Testis (tissue), 5 donors: ENCODE measurements at regions of chr1 and their contacts with region 1.

Region 1: DNA sequence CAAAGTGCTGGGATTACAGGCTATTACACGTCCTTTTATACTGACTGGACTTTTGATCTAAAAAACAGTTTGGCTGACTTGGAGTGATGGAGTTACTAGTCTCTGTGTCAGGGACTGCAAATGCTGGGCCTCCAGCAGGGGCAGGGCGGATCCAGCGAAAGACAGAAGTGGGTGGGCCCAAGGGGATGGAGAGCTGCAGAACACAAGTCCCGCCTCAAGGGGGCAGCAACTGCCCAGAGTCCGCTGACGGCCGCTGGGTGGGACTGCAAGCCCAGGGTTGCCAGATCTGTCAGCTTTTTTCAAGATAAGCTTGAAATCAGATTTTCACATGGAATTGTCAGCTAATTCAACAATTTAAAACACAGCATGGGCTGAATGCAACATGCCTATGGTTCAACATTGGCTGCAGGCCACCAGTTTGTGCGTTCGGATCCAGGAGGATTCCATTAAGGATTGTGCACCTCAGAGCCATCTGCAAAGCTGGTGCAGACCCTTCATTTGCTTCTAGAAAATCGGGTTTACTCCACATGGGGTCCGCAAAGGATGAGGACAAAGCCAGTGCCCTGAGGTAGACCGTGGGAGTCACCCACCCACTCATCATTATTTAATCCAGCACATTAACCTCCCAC is 10.7 kb downstream of the STMN1 start:
- DNase-seq: peak; percentile 92
- H3K4me3 ChIP-seq: no peak overlapping the region
- H3K27ac ChIP-seq: peak overlapping the region in 1 of 2 donors; percentile 20
- H3K4me1 ChIP-seq: peaks cover 51% of the 10 kb centered on the region
- H3K27me3 ChIP-seq: no peaks in the 10 kb centered on the region
- CTCF ChIP-seq: peak; percentile 92 to 97 (median 95)
- POLR2A ChIP-seq: no peak

Region 2: GRCh38 chr1:25503551-25504426 is 391.7 kb before region 1 on chr1:
- intact Hi-C with region 1: no loop called
- DNase-seq: peak; percentile 65
- H3K4me3 ChIP-seq: no peak overlapping the region
- H3K27ac ChIP-seq: no peak overlapping the region
- H3K4me1 ChIP-seq: peaks cover 27% of the 10 kb centered on the region
- H3K27me3 ChIP-seq: no peaks in the 10 kb centered on the region
- CTCF ChIP-seq: peak in 1 of 3 experiments; percentile 26
- POLR2A ChIP-seq: no peak

Region 3: DNA sequence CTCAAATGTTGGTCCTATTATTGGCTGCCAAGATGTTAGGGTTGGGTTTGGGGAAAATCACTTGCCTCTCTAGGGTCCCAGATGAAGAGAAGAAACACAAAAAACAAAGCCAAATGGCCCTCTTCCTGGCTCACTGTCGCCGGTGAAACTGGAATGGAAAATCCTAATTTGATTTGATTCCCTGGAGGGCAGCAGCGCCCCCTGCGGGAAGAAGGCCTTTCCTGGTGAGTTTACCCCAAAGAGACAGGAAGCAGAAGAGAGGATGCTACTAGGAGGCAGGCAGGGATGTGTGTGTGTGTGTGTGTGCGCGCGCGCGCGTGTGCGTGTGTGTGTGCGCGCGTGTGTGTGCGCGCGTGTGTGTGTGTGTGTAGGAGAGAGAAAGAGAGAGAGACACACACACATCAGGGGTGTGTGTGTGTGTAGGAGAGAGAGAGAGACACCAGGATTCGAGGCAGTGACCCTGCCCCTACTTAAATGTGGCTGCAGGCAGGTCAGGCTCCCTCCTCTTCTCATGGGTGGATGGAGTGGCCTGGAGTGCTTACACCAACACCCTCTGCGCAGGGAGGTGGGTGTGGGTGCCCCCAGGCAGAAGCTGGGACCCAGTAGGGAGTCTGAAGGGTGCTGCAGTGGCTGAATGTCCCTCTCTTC is 98.5 kb before region 1 on chr1:
- intact Hi-C with region 1: no loop called
- DNase-seq: peak; percentile 90
- H3K4me3 ChIP-seq: no peak overlapping the region
- H3K27ac ChIP-seq: no peak overlapping the region
- H3K4me1 ChIP-seq: peaks cover 12% of the 10 kb centered on the region
- H3K27me3 ChIP-seq: no peaks in the 10 kb centered on the region
- CTCF ChIP-seq: peak; percentile 62 to 87 (median 68)
- POLR2A ChIP-seq: no peak

Region 4: GRCh38 chr1:25997828-25998761 is 102.6 kb after region 1 on chr1 and contains the start of gene PAFAH2:
- intact Hi-C with region 1: loop called (anchors 5 kb)
- DNase-seq: peak; percentile 99
- H3K4me3 ChIP-seq: peak within 1 kb of the TSS; percentile 61 to 70
- H3K27ac ChIP-seq: peak within 1 kb of the TSS; percentile 61 to 90
- H3K4me1 ChIP-seq: peaks cover 28% of the 10 kb centered on the region
- H3K27me3 ChIP-seq: no peaks in the 10 kb centered on the region
- CTCF ChIP-seq: peak; percentile 92 to 100 (median 100)
- POLR2A ChIP-seq: no peak
- total RNA-seq, gene PAFAH2: 14.5 to 24.1 TPM

Region 5: GRCh38 chr1:26145041-26145959 is 249.8 kb after region 1 on chr1:
- intact Hi-C with region 1: loop called (anchors 10 kb)
- DNase-seq: peak; percentile 90
- H3K4me3 ChIP-seq: no peak overlapping the region
- H3K27ac ChIP-seq: no peak overlapping the region
- H3K4me1 ChIP-seq: no peaks in the 10 kb centered on the region
- H3K27me3 ChIP-seq: no peaks in the 10 kb centered on the region
- CTCF ChIP-seq: peak; percentile 65 to 72 (median 65)
- POLR2A ChIP-seq: no peak

Region 6: GRCh38 chr1:26335774-26336476 is 440.4 kb after region 1 on chr1:
- intact Hi-C with region 1: no loop called
- DNase-seq: no peak
- H3K4me3 ChIP-seq: peak overlapping the region; percentile 39 to 55
- H3K27ac ChIP-seq: no peak overlapping the region
- H3K4me1 ChIP-seq: peaks cover 8% of the 10 kb centered on the region
- H3K27me3 ChIP-seq: peaks cover 5% of the 10 kb centered on the region
- CTCF ChIP-seq: no peak
- POLR2A ChIP-seq: no peak